ENCODE measurements at regions of chr2 and their contacts with region 1.

Region 1: GRCh38 chr2:8303322-8303832 is 378.5 kb upstream of the ID2 start:
- DNase-seq: peak; percentile 41 to 82 (median 73)
- ATAC-seq: peak; percentile 80 to 88 (median 87)
- H3K4me3 ChIP-seq: peak overlapping the region; percentile 9 to 36
- H3K4me3 Mint-ChIP-seq: peak overlapping the region; percentile 28 to 54 (median 52)
- H3K27ac ChIP-seq: peak overlapping the region; percentile 28
- H3K27ac Mint-ChIP-seq: peak overlapping the region; percentile 69 to 77
- H3K4me1 ChIP-seq: peaks cover 8 to 73% of the 10 kb centered on the region in 2 experiments
- H3K4me1 Mint-ChIP-seq: peaks cover 40 to 86% (median 52%) of the 10 kb centered on the region in 3 donors
- H3K27me3 ChIP-seq: no peaks in the 10 kb centered on the region
- H3K27me3 Mint-ChIP-seq: no peaks in the 10 kb centered on the region

Region 2: DNA sequence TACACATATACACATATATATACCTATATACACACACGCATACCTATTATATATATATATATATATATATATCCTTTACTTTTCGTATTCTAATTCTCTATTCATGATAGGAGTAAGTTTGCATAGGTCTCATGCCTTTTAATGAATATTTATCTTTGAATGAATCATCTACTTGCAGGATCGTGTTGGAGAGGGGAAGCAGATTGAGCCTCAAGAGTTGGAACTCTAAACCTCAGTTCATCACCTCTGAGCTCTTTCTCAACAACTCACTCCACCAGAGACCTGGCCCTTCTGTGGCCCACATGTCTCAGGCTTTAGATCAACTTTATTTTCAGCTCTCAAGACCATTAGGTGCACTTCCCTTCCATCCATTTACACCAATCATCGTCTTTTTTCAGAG is 112.0 kb before region 1 on chr2:
- CTCF ChIA-PET with region 1: no interaction called
- POLR2A ChIA-PET with region 1: interaction called in 1 of 2 experiments, 10 read pairs
- DNase-seq: no peak
- ATAC-seq: no peak
- H3K4me3 ChIP-seq: no peak overlapping the region
- H3K4me3 Mint-ChIP-seq: no peak overlapping the region
- H3K27ac ChIP-seq: no peak overlapping the region
- H3K27ac Mint-ChIP-seq: no peak overlapping the region
- H3K4me1 ChIP-seq: no peaks in the 10 kb centered on the region
- H3K4me1 Mint-ChIP-seq: no peaks in the 10 kb centered on the region
- H3K27me3 ChIP-seq: no peaks in the 10 kb centered on the region
- H3K27me3 Mint-ChIP-seq: peaks cover 0 to 9% of the 10 kb centered on the region in 2 donors

Region 3: DNA sequence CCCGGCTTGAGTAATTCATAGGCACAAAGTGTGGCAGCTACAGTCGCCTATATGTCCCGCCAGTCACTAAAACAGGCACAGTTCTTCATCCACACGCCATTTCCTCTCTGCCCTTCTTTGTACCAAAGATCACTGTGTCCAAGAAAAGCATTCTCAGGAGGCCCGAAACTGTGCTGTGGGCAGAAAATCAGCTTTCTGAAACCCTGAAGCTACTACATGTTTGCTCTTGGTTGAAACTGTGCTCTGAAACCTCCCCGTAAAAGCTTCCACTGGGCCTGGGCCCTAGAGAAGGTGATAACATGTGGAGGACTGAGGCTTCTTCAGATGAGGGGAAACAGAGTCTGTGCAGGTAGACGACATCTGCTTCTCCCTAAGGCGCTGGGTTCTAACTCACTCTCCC is 302.8 kb after region 1 on chr2:
- CTCF ChIA-PET with region 1: no interaction called
- POLR2A ChIA-PET with region 1: no interaction called
- DNase-seq: no peak
- ATAC-seq: no peak
- H3K4me3 ChIP-seq: no peak overlapping the region
- H3K4me3 Mint-ChIP-seq: no peak overlapping the region
- H3K27ac ChIP-seq: no peak overlapping the region
- H3K27ac Mint-ChIP-seq: no peak overlapping the region
- H3K4me1 ChIP-seq: peaks cover 5 to 9% of the 10 kb centered on the region in 2 experiments
- H3K4me1 Mint-ChIP-seq: peaks cover 0 to 9% (median 9%) of the 10 kb centered on the region in 3 donors
- H3K27me3 ChIP-seq: no peaks in the 10 kb centered on the region
- H3K27me3 Mint-ChIP-seq: no peaks in the 10 kb centered on the region